SK-N-SH (cell line): ENCODE measurements at regions of chr15 and their contacts with region 1.

Region 1: GRCh38 chr15:76190834-76191538 is 120.3 kb downstream of the ETFA start:
- DNase-seq: peak; percentile 93
- H3K4me3 ChIP-seq: no peak overlapping the region; a peak in 1 of 4 replicates
- H3K27ac ChIP-seq: no peak overlapping the region
- H3K4me1 ChIP-seq: peaks cover 2 to 11% of the 10 kb centered on the region in 2 experiments; a peak in 1 of 4 replicates
- H3K27me3 ChIP-seq: no peaks in the 10 kb centered on the region
- CTCF ChIP-seq: peak; percentile 85
- EP300 ChIP-seq: no peak
- RAD21 ChIP-seq: peak; percentile 93

Region 2: DNA sequence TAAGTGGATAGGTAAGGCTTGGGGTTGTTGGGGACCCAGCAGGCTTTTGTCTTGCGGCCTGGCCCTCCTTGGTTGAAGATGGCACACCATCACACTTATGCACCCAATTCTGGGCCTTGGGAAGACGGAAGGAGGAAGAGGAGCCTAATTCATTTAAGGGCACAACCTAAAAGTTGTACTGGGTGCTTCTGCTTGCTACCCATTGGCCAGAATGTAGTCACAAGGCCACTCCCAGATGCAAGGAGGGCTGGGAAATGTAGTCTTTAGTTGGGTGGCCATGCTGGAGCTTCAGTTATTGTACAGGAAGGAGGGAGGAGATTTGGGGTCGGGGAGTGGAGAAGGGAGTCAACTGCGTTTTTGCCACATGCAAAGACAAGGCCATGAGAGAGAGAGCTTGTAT is 22.0 kb before region 1 on chr15:
- CTCF ChIA-PET with region 1: interaction called, 13 read pairs
- POLR2A ChIA-PET with region 1: no interaction called
- DNase-seq: no peak
- H3K4me3 ChIP-seq: no peak overlapping the region
- H3K27ac ChIP-seq: no peak overlapping the region
- H3K4me1 ChIP-seq: no peaks in the 10 kb centered on the region
- H3K27me3 ChIP-seq: no peaks in the 10 kb centered on the region
- CTCF ChIP-seq: no peak
- EP300 ChIP-seq: no peak
- RAD21 ChIP-seq: no peak

Region 3: DNA sequence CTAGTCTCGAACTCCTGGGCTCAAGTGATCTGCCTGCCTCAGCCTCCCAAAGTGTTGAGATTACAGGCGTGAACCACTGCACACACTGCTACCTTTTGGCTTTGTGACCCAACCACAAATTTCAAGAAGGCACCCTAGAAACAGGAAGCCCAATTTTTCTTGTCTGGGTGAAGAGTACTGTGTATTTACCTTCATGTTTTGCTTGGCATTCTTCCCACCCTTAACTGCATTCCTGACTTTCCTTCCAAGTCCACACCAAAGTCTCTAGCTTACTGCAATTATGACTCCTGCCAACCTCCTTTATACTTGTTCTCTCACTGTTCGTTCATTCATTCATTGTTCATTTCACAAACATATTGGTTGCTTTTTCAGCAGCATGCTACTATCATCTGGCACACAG is 26.0 kb after region 1 on chr15:
- CTCF ChIA-PET with region 1: interaction called, 11 read pairs
- POLR2A ChIA-PET with region 1: no interaction called
- DNase-seq: no peak
- H3K4me3 ChIP-seq: no peak overlapping the region
- H3K27ac ChIP-seq: no peak overlapping the region
- H3K4me1 ChIP-seq: peaks cover 0 to 6% of the 10 kb centered on the region in 2 experiments; a peak in 1 of 4 replicates
- H3K27me3 ChIP-seq: no peaks in the 10 kb centered on the region
- CTCF ChIP-seq: no peak
- EP300 ChIP-seq: no peak
- RAD21 ChIP-seq: no peak

Region 4: DNA sequence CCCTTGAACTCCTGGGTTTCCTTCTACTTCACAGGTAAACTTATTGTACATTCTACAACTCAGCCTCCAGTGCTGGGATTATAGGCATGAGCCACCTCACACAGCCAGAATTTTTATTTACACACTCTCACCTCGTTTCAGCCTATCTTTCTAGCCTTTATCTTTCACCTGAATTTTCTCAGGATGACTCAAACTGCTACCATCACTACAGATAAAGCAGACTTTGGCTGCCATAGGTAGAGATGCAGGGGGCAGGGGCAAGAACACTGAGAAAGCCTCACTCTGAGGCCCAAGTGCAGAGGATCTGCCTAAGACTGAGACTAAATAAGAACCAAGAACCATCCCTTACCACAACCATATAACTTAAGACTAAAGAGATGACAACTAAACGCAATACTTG is 61.3 kb after region 1 on chr15:
- CTCF ChIA-PET with region 1: no interaction called
- POLR2A ChIA-PET with region 1: no interaction called
- DNase-seq: no peak
- H3K4me3 ChIP-seq: no peak overlapping the region
- H3K27ac ChIP-seq: no peak overlapping the region
- H3K4me1 ChIP-seq: no peaks in the 10 kb centered on the region
- H3K27me3 ChIP-seq: no peaks in the 10 kb centered on the region
- CTCF ChIP-seq: no peak
- EP300 ChIP-seq: no peak
- RAD21 ChIP-seq: no peak

Region 5: GRCh38 chr15:76330080-76330680 is 139.2 kb after region 1 on chr15:
- CTCF ChIA-PET with region 1: interaction called, 29 read pairs
- POLR2A ChIA-PET with region 1: no interaction called
- DNase-seq: peak; percentile 71
- H3K4me3 ChIP-seq: no peak overlapping the region
- H3K27ac ChIP-seq: no peak overlapping the region
- H3K4me1 ChIP-seq: peaks cover 0 to 5% of the 10 kb centered on the region in 2 experiments; a peak in 1 of 4 replicates
- H3K27me3 ChIP-seq: no peaks in the 10 kb centered on the region
- CTCF ChIP-seq: peak; percentile 52
- EP300 ChIP-seq: no peak
- RAD21 ChIP-seq: peak; percentile 67

Region 6: DNA sequence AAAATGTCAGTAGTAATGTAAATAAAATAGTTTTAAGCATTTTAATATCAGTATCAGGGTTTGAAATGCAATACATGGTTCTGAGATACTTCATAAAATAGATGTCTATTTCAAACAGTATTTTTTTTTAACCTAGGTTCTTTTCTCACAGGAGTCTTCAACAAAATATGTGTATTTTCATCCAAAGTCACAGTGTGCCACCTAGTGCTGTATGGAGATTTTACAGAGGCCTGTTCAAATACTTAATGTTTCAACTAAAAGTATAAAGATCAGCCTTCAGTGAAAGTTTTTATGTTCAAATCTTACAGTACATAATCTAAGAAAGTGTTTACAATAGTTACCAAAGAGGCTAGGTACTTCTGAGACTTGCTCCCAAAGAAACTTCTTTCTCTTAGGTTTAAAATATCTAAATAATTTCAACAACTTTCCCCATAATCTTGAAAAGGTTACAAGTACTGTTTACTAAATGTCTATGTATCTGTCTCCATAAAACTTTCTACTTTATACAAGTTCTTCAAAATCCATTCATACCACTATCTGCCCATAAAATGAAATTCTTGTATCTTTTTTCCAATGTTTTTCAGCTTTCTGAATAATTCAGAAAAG is 675.8 kb after region 1 on chr15:
- CTCF ChIA-PET with region 1: interaction called, 23 read pairs
- POLR2A ChIA-PET with region 1: no interaction called
- DNase-seq: peak; percentile 29
- H3K4me3 ChIP-seq: no peak overlapping the region
- H3K27ac ChIP-seq: no peak overlapping the region
- H3K4me1 ChIP-seq: no peaks in the 10 kb centered on the region; a peak in 2 of 4 replicates
- H3K27me3 ChIP-seq: no peaks in the 10 kb centered on the region
- CTCF ChIP-seq: peak; percentile 76
- EP300 ChIP-seq: no peak
- RAD21 ChIP-seq: peak; percentile 82